ENCODE measurements at regions of chr11 and their contacts with region 1.

Region 1: DNA sequence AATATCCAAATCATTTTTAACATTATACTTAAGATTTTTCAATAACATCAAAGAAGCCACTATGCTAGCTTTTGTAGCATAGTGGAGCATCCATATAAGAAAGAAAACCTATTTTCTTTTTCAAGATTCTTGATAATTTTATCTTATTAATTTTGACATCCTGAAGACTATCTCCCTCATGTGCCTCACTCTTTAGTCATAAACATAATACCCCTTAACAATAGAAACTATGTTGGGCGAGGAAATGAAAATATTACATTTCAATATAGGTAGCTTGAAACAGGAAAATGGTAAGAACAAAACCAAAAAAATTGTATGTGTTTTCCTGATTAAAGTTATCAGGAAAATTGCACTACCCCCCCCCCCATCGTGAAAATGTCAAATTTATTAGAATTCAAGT is 40.1 kb downstream of the ELMOD1 start:
- DNase-seq: no peak
- ATAC-seq: no peak
- H3K4me3 ChIP-seq: no peak overlapping the region
- H3K4me3 Mint-ChIP-seq: no peak overlapping the region
- H3K27ac ChIP-seq: no peak overlapping the region
- H3K27ac Mint-ChIP-seq: no peak overlapping the region
- H3K4me1 ChIP-seq: no peaks in the 10 kb centered on the region
- H3K4me1 Mint-ChIP-seq: no peaks in the 10 kb centered on the region
- H3K27me3 ChIP-seq: no peaks in the 10 kb centered on the region
- H3K27me3 Mint-ChIP-seq: peaks cover 44 to 53% of the 10 kb centered on the region in 2 donors

Region 2: DNA sequence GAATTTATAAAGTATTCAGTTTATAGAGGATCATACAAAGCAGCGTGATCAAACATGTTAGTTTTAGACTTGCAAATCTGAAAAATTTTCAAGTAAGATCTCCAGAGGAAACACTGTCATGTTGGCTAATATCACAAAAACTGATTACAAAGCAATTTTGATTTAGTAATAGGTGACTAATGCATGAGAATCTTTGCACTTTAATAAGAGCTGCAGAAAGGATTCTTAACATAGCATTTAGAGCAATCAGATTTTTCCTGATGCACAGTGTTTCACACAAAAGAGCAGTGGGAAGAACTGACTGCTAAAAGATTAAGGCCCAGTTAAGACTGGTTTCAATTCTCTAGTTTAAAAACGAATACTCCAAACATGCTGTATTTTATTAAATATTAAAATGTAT is 934.0 kb before region 1 on chr11:
- CTCF ChIA-PET with region 1: no interaction called
- POLR2A ChIA-PET with region 1: no interaction called
- DNase-seq: no peak
- ATAC-seq: no peak
- H3K4me3 ChIP-seq: no peak overlapping the region
- H3K4me3 Mint-ChIP-seq: no peak overlapping the region
- H3K27ac ChIP-seq: no peak overlapping the region
- H3K27ac Mint-ChIP-seq: no peak overlapping the region
- H3K4me1 ChIP-seq: no peaks in the 10 kb centered on the region
- H3K4me1 Mint-ChIP-seq: no peaks in the 10 kb centered on the region
- H3K27me3 ChIP-seq: no peaks in the 10 kb centered on the region
- H3K27me3 Mint-ChIP-seq: no peaks in the 10 kb centered on the region

Region 3: DNA sequence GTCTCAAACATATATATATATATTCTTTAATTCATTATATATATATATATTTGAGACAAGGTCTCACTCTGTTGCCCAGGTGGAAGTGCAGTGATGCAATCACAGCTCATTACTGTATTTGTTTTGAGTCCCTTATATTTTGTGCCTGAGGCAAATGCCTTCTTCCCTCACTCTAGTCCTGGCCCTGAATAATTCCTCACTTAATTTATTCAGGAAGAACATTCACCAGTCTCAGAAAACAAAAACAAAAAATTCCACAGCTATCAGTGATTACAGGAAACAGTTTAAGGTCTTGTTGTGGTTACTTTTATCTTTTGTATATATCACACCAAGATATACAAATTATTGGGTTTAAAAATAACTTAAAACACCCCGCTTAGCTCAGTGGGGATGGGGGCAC is 329.2 kb before region 1 on chr11:
- CTCF ChIA-PET with region 1: no interaction called
- POLR2A ChIA-PET with region 1: no interaction called
- DNase-seq: no peak
- ATAC-seq: no peak
- H3K4me3 ChIP-seq: no peak overlapping the region
- H3K4me3 Mint-ChIP-seq: no peak overlapping the region
- H3K27ac ChIP-seq: no peak overlapping the region
- H3K27ac Mint-ChIP-seq: no peak overlapping the region
- H3K4me1 ChIP-seq: no peaks in the 10 kb centered on the region
- H3K4me1 Mint-ChIP-seq: no peaks in the 10 kb centered on the region
- H3K27me3 ChIP-seq: no peaks in the 10 kb centered on the region
- H3K27me3 Mint-ChIP-seq: no peaks in the 10 kb centered on the region

Region 4: GRCh38 chr11:107549253-107549953 is 81.6 kb before region 1 on chr11:
- CTCF ChIA-PET with region 1: no interaction called
- POLR2A ChIA-PET with region 1: no interaction called
- DNase-seq: peak in 18 of 35 experiments; percentile 3 to 67 (median 17)
- ATAC-seq: peak in 1 of 4 experiments; percentile 41
- H3K4me3 ChIP-seq: no peak overlapping the region
- H3K4me3 Mint-ChIP-seq: no peak overlapping the region
- H3K27ac ChIP-seq: no peak overlapping the region
- H3K27ac Mint-ChIP-seq: no peak overlapping the region
- H3K4me1 ChIP-seq: no peaks in the 10 kb centered on the region
- H3K4me1 Mint-ChIP-seq: no peaks in the 10 kb centered on the region
- H3K27me3 ChIP-seq: no peaks in the 10 kb centered on the region
- H3K27me3 Mint-ChIP-seq: no peaks in the 10 kb centered on the region

Region 5: DNA sequence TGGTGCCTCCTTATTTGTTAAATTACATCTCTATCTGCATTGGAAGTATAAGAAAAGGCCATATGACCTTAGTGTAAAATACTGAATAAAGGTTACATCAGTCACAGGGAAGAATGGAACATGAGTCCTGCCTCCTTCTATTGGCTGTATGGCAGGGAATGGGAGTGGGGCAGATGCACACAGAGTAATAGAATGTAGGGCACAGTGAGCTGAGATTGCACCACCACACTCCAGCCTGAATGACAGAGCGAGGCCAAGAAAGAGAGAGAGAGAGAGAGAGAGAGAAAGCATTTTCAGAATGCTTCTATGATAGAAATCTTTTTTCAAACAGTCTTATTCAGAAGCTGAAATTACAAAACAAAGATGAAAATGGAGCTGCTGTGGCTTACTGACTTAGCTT is 22.0 kb after region 1 on chr11:
- CTCF ChIA-PET with region 1: no interaction called
- POLR2A ChIA-PET with region 1: interaction called in 1 of 2 experiments, 14 read pairs
- DNase-seq: no peak
- ATAC-seq: no peak
- H3K4me3 ChIP-seq: no peak overlapping the region
- H3K4me3 Mint-ChIP-seq: no peak overlapping the region
- H3K27ac ChIP-seq: no peak overlapping the region
- H3K27ac Mint-ChIP-seq: no peak overlapping the region
- H3K4me1 ChIP-seq: no peaks in the 10 kb centered on the region
- H3K4me1 Mint-ChIP-seq: no peaks in the 10 kb centered on the region
- H3K27me3 ChIP-seq: peaks cover 0 to 4% of the 10 kb centered on the region in 2 experiments
- H3K27me3 Mint-ChIP-seq: peaks cover 13 to 36% of the 10 kb centered on the region in 2 donors

Region 6: DNA sequence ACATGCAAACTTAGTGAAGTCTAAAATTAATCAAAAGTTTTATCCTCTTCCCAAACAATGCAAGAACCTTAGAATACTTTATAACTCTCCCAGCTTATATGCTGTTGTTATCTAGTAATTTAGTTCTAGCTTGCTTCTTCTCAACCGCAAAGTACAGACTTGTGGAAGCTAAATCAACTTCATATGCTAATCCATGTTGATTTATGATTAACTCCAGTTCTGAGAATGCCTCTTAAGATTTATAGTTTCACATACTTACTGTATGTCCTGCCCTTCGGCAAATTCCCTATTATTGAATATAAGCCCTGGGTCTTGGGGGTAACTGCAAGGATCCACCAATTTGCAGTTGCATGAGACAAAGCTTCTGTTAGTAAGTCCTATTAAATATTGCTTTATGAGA is 245.1 kb after region 1 on chr11:
- CTCF ChIA-PET with region 1: no interaction called
- POLR2A ChIA-PET with region 1: no interaction called
- DNase-seq: no peak
- ATAC-seq: no peak
- H3K4me3 ChIP-seq: no peak overlapping the region
- H3K4me3 Mint-ChIP-seq: no peak overlapping the region
- H3K27ac ChIP-seq: no peak overlapping the region
- H3K27ac Mint-ChIP-seq: no peak overlapping the region
- H3K4me1 ChIP-seq: no peaks in the 10 kb centered on the region
- H3K4me1 Mint-ChIP-seq: no peaks in the 10 kb centered on the region
- H3K27me3 ChIP-seq: peaks cover 0 to 6% of the 10 kb centered on the region in 2 experiments
- H3K27me3 Mint-ChIP-seq: no peaks in the 10 kb centered on the region

Measured in T-cell (primary cell).